ENCODE measurements at regions of chr2 and their contacts with region 1.

Region 1: DNA sequence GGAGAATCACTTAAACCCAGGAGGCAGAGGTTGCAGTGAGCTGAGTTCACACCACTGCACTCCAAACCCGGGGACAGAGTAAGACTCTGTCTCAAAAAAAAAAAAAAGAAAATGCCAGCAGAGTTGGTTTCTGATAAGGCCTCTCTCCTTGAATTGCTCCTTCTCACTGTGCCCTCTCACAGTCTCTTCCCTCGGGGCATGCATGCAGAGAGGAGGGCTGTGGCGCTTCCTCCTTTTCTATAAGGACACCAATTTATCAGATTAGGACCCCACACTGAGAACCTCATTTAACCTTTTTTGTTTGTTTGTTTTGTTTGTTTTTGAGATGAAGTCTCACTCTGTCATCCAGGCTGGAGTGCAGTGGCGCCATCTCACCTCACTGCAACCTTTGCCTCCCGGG is 110.5 kb downstream of the ZFP36L2 start:
- DNase-seq: no peak
- H3K4me3 ChIP-seq: no peak overlapping the region
- H3K27ac ChIP-seq: no peak overlapping the region
- H3K4me1 ChIP-seq: no peaks in the 10 kb centered on the region
- H3K27me3 ChIP-seq: no peaks in the 10 kb centered on the region
- CTCF ChIP-seq: no peak
- POLR2A ChIP-seq: no peak

Region 2: GRCh38 chr2:42974721-42975717 is 140.9 kb before region 1 on chr2:
- intact Hi-C with region 1: no loop called
- DNase-seq: peak; percentile 64
- H3K4me3 ChIP-seq: peak overlapping the region; percentile 18 to 29
- H3K27ac ChIP-seq: peak overlapping the region; percentile 46 to 65
- H3K4me1 ChIP-seq: no peaks in the 10 kb centered on the region
- H3K27me3 ChIP-seq: no peaks in the 10 kb centered on the region
- CTCF ChIP-seq: peak; percentile 88 to 96 (median 92)
- POLR2A ChIP-seq: no peak

Region 3: DNA sequence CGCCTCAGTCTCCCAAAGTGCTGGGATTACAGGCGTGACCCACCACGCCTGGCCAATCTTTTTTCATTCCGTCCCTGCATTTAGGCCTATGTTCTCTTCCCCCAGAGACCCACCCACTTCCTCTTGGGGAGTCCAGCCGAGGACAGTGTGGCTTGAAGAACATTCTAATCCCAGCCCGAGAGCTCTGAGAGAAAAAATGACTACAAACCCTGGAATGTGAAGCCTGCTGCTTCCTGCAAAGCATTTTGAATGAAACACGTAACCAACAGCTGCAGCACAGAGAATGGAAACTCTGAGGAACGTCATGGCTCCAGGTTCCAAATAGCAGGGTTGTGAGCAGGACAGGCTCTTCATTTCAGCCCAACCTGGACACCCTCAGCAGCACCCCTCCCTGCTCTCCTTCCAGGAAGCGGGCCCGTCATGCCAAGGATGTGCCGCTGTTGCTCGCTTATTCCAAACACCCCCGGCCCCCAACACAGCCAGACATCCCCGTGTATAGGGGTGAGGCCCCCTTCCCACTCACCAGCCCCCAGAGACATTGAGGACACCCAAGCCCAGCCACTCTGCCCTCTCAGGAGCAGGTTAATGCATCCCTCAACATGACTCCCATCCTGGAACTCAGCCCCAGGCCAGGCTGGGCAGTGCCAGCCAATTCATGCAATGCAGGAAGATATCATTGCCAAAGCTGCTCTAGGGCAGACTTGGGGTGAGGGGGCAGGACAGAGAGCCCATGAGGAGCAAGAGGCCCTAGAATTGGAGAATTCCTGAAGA is 29.2 kb before region 1 on chr2:
- intact Hi-C with region 1: loop called (anchors 5 kb)
- DNase-seq: peak; percentile 72
- H3K4me3 ChIP-seq: no peak overlapping the region
- H3K27ac ChIP-seq: peak overlapping the region; percentile 79 to 87
- H3K4me1 ChIP-seq: peaks cover 8% of the 10 kb centered on the region
- H3K27me3 ChIP-seq: no peaks in the 10 kb centered on the region
- CTCF ChIP-seq: no peak
- POLR2A ChIP-seq: no peak